ENCODE measurements at regions of chr14 and their contacts with region 1.

Region 1: DNA sequence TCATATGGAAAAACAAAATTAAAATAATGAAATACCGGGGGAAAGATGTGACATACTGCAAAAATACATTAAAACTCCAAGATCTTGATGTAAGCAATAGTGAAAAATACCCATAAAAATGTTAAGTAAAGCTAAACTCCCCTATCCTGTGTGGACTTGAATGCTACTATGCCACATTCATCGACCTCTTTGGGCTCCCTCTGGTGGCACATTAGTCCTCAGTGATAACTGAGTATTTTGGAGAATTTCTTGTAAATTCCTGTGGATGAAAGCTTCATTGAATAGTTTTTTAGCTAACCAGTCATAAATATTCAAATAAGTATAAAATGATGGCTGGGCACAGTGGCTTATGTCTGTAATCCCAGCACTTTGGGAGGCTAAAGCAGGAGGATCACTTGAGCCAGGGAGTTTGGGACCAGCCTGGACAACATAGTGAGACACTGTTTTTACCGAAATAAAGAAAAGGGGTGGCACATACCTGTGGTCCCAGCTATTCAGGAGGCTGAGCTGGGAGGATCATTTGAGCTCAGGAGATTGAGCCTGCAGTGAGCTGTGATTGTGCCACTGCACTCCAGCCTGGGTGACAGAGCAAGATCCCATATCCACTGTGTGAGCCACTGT is 42.4 kb upstream of the SGPP1 start:
- DNase-seq: peak; percentile 63
- CTCF ChIP-seq: peak; percentile 69

Region 2: GRCh38 chr14:63388763-63389431 is 381.4 kb before region 1 on chr14:
- CTCF ChIA-PET with region 1: interaction called, 15 read pairs
- POLR2A ChIA-PET with region 1: no interaction called
- DNase-seq: peak; percentile 56
- CTCF ChIP-seq: peak; percentile 84

Region 3: DNA sequence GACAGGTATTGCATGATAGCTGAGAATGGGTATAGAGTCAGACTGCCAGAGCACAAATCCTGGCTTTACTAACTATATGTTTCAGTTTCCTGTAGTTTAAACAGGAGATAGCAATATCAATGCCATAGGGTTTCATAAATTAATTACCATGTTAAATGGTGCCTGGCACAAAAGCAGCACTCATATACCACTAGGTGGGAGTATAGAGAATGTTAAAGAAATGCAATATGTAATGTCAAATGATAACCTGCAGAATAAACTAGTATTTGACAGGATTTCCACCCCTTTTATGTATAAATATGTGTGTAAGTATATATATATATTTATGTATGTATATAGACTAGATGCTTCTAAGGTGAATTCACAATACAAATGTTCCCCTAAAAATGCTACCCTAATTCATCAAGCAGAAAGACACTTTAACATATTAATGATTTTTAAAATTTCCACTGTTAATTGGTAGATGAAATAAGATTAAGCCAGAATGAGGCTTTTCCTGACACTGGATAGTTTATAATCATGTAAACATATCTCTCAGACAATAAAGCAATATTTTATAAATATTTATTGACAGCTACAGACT is 137.3 kb before region 1 on chr14:
- CTCF ChIA-PET with region 1: interaction called, 16 read pairs
- POLR2A ChIA-PET with region 1: no interaction called
- DNase-seq: peak; percentile 40
- CTCF ChIP-seq: peak; percentile 59

Region 4: GRCh38 chr14:63641473-63642228 is 128.6 kb before region 1 on chr14 and contains the start of gene WDR89:
- CTCF ChIA-PET with region 1: interaction called, 12 read pairs
- POLR2A ChIA-PET with region 1: no interaction called
- DNase-seq: peak; percentile 95
- CTCF ChIP-seq: peak; percentile 52

Region 5: GRCh38 chr14:63757211-63757610 is 13.1 kb before region 1 on chr14:
- CTCF ChIA-PET with region 1: interaction called, 13 read pairs
- POLR2A ChIA-PET with region 1: no interaction called
- DNase-seq: no peak
- CTCF ChIP-seq: no peak